GM12878 (cell line): ENCODE measurements at regions of chr15 and their contacts with region 1.

Region 1: DNA sequence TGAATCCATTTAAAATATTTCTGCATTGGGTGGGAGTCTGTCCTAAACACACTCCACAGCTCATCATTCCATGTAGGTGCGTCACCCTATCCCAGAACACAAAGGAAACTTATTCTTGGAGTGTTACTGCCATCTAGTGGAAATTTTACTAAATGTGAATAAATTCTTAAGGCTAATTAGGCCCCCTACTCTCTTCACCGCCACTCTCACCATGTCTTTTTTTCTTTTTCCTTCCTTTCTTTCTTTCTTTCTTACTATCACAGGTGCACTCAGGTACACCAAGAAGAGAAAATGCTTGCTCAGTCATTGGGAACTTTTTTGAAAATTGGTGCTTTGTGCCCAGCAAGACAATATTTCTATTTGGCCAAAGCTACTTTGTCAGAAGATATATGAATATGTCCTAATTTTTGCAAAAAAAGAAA is 26.4 kb upstream of the ATP8B4 start:
- DNase-seq: peak; percentile 16
- ATAC-seq: peak; percentile 75
- H3K4me3 ChIP-seq: no peak overlapping the region
- H3K27ac ChIP-seq: no peak overlapping the region
- H3K4me1 ChIP-seq: no peaks in the 10 kb centered on the region
- H3K27me3 ChIP-seq: no peaks in the 10 kb centered on the region; a peak in 1 of 4 replicates
- CTCF ChIP-seq: peak; percentile 25 to 47 (median 31); a peak in 4 of 6 replicates
- EP300 ChIP-seq: no peak
- POLR2A ChIP-seq: no peak
- RAD21 ChIP-seq: peak; percentile 66

Region 2: DNA sequence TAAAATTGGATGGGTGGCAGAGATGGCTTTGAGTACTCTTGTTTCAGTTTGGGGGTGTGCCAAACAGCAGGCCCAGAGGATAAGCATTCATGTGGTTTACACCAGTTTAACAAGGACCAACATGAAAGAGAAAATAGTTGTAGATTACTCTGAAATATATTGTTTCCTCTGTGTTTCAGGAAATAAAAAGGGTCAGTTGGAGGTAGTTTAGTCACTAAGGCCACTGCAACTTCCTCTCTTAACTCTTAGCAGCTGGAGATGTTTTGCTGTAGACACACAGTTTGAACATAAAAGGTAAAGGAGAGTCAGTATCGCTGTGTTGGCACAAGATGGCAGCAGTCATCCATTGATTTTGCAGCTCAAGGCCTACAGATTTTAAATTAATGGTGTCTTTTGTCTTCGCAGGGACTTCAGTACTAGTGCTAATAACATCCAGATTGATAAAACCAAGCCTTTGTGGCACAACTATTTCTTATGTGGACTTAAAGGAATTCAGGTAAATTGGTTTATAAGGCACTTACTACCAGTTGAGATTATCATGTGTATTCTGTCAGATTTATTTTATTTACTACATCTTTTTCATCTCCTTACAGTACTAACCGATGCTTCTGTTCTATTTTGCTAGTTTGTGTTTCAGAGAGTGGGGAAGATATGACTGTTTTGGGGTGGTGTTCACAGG is 909.9 kb before region 1 on chr15:
- CTCF ChIA-PET with region 1: interaction called, 20 read pairs
- POLR2A ChIA-PET with region 1: no interaction called
- RAD21 ChIA-PET with region 1: interaction called, 10 read pairs
- SMC1A ChIA-PET with region 1: interaction called, 6 read pairs
- in situ Hi-C with region 1: loop called (anchors 10 kb)
- intact Hi-C with region 1: loop called (anchors 1 kb)
- DNase-seq: peak; percentile 56
- ATAC-seq: peak; percentile 95
- H3K4me3 ChIP-seq: no peak overlapping the region
- H3K27ac ChIP-seq: no peak overlapping the region
- H3K4me1 ChIP-seq: peaks cover 7% of the 10 kb centered on the region; the same call in 1 of the 2 replicates
- H3K27me3 ChIP-seq: no peaks in the 10 kb centered on the region
- CTCF ChIP-seq: peak; percentile 68 to 85 (median 82)
- EP300 ChIP-seq: no peak
- POLR2A ChIP-seq: no peak
- RAD21 ChIP-seq: peak; percentile 84

Region 3: GRCh38 chr15:49876401-49877038 is 268.9 kb before region 1 on chr15:
- CTCF ChIA-PET with region 1: interaction called, 17 read pairs
- POLR2A ChIA-PET with region 1: no interaction called
- RAD21 ChIA-PET with region 1: interaction called, 7 read pairs
- SMC1A ChIA-PET with region 1: no interaction called
- in situ Hi-C with region 1: no loop called
- intact Hi-C with region 1: loop called (anchors 5 kb)
- DNase-seq: no peak
- ATAC-seq: no peak
- H3K4me3 ChIP-seq: no peak overlapping the region
- H3K27ac ChIP-seq: no peak overlapping the region
- H3K4me1 ChIP-seq: no peaks in the 10 kb centered on the region
- H3K27me3 ChIP-seq: no peaks in the 10 kb centered on the region
- CTCF ChIP-seq: peak; percentile 28 to 39 (median 37); a peak in 4 of 6 replicates
- EP300 ChIP-seq: no peak
- POLR2A ChIP-seq: no peak
- RAD21 ChIP-seq: peak; percentile 58

Region 4: DNA sequence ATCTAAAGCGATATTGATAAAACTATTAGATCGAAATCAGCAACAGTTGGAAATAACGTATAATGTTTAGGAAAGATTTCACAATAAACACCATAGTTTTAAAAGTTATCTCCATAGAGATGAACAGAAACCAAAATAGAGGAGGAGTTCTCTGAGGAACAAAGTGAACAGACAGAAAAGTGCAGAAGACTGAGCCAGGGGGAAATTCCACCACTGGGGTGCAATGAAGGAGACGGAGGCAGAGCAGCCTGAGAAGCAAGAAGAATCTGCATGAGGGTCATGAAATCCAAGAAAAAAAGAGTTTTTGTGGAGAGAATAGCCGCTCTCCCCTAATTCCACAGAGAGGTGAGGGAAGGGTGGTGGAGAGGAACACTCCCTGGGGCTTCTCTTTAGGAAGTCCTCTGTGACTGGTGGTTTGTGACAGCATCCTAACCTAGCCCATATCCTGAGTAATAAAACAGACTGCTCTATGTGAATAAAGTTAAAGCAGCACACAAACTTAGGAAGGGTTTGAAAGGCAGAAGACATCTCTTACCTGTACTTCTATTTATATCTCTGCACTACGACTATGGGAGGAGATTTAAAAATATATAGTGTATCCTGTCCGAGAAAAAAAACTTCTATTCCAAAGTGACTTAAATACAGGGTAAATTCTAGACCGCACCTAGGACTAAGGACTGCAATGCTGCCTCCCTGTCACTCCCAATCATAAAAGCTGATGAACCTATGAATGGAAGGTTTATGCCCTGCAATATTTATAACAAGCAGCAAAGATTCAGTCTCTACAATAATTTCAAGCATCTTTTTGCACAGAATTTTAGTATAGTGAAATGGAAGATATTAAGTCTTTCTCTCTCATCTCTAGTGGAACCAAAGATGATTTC is 49.3 kb before region 1 on chr15:
- CTCF ChIA-PET with region 1: no interaction called
- POLR2A ChIA-PET with region 1: no interaction called
- RAD21 ChIA-PET with region 1: no interaction called
- SMC1A ChIA-PET with region 1: no interaction called
- in situ Hi-C with region 1: no loop called
- intact Hi-C with region 1: no loop called
- DNase-seq: no peak
- ATAC-seq: no peak
- H3K4me3 ChIP-seq: no peak overlapping the region
- H3K27ac ChIP-seq: no peak overlapping the region
- H3K4me1 ChIP-seq: no peaks in the 10 kb centered on the region
- H3K27me3 ChIP-seq: no peaks in the 10 kb centered on the region
- CTCF ChIP-seq: no peak
- EP300 ChIP-seq: no peak
- POLR2A ChIP-seq: no peak
- RAD21 ChIP-seq: no peak

Region 5: GRCh38 chr15:50116473-50116872 is 29.0 kb before region 1 on chr15:
- CTCF ChIA-PET with region 1: interaction called, 15 read pairs
- POLR2A ChIA-PET with region 1: no interaction called
- RAD21 ChIA-PET with region 1: no interaction called
- SMC1A ChIA-PET with region 1: interaction called, 8 read pairs
- in situ Hi-C with region 1: no loop called
- intact Hi-C with region 1: no loop called
- DNase-seq: no peak
- ATAC-seq: peak; percentile 70
- H3K4me3 ChIP-seq: no peak overlapping the region
- H3K27ac ChIP-seq: no peak overlapping the region
- H3K4me1 ChIP-seq: peaks cover 8% of the 10 kb centered on the region
- H3K27me3 ChIP-seq: peaks cover 0 to 6% of the 10 kb centered on the region in 2 experiments; a peak in 2 of 4 replicates
- CTCF ChIP-seq: peak; percentile 38 to 49 (median 44); a peak in 4 of 6 replicates
- EP300 ChIP-seq: no peak
- POLR2A ChIP-seq: no peak
- RAD21 ChIP-seq: 0 out of 2 replicates have a peak, but pooled peaks have one; percentile 26